Activated naive CD4-positive, alpha-beta T cell treated with anti-CD3 and anti-CD28 coated beads for 36 hours (primary cell): ENCODE measurements at regions of chr4 and their contacts with region 1.

Region 1: DNA sequence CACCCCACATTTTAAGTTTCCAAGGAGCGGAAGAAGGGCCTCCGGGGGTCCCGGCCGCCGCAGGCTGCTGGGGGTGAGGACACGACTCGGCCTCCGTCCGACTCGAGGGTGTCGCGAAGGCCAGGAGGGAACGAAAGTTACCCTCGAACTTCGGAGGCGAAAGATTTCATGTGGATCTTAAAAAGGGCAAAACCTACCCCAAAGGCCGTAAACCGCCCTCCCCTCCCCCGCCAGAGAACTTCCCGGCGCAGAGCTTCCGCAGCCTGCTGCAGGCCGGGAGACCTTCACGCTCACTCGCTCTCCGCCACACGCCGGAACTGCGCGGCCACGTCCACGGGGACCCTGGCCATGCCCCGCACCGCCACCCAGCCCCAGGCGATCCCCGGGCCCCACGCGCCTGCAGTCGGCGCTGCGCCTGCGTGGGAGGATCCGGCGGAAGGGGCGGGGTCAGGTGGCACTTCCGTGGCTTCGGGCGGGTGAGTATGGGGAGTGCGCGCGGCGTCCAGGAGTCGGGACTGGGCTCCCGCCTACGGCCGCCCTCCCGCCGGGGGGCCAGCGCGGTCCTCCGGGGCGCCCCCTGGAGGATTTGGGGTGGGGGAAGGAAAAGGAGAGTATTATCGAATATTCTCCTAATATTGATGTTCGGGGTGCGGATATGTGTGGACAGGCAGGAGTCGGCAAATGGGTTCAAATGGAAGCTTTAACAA is at the start of gene MMAA:
- DNase-seq: peak; percentile 95
- H3K4me3 Mint-ChIP-seq: peak within 1 kb of the TSS; percentile 93
- H3K27ac Mint-ChIP-seq: peak within 1 kb of the TSS; percentile 99
- H3K4me1 Mint-ChIP-seq: peaks cover 47% of the 10 kb centered on the region
- H3K27me3 Mint-ChIP-seq: no peaks in the 10 kb centered on the region
- total RNA-seq, gene MMAA: 15.2 to 19.6 TPM

Region 2: DNA sequence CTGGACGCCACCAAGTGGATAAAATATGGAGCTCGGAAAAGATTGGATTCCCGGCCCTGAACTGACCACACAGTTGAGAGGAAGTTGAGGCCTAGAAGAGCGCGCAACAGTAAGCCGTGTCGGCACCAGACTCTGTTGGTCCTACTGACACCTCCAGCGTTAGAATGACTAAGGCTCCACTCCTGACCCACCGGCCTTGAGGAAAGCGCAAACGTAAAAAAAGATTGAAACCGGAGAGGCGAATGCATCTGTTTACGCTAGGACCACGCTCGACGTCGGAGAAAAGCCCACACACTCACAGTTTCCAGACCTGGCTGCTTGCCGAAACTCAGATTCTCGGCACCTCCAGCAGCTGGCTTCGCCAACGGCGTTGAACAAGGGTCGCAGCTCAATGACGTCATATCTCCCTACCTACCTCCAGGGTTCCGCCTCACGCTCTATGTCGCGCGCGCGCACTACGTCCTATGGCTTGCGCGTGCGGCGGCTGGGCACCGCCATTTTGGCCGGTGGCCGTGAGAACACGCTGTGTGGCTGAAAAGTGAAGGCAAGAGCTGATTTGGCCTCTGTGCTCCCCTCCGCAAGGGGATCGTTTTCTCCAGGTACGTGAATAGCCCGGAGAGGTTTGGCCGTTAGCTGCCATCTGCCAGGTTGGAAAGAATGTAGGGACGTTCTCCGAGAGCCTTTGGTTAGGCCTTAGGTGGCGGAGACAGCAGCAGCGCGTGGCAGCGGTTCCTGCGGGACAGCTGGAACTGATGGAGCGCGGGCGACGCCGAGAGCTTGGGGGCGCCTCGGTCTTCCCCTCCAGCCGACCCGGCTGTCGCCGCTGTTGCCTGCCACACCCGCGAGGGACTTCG is 521.0 kb before region 1 on chr4 and contains the starts of genes ABCE1 and ANAPC10:
- CTCF ChIA-PET with region 1: interaction called, 6 read pairs
- intact Hi-C with region 1: loop called (anchors 1 kb)
- DNase-seq: peak; percentile 97
- H3K4me3 Mint-ChIP-seq: peak within 1 kb of the TSS; percentile 92
- H3K27ac Mint-ChIP-seq: peak within 1 kb of the TSS; percentile 97
- H3K4me1 Mint-ChIP-seq: peaks cover 23% of the 10 kb centered on the region
- H3K27me3 Mint-ChIP-seq: no peaks in the 10 kb centered on the region
- total RNA-seq, gene ABCE1: 164 to 174 TPM
- total RNA-seq, gene ANAPC10: 23.5 to 26.5 TPM

Region 3: DNA sequence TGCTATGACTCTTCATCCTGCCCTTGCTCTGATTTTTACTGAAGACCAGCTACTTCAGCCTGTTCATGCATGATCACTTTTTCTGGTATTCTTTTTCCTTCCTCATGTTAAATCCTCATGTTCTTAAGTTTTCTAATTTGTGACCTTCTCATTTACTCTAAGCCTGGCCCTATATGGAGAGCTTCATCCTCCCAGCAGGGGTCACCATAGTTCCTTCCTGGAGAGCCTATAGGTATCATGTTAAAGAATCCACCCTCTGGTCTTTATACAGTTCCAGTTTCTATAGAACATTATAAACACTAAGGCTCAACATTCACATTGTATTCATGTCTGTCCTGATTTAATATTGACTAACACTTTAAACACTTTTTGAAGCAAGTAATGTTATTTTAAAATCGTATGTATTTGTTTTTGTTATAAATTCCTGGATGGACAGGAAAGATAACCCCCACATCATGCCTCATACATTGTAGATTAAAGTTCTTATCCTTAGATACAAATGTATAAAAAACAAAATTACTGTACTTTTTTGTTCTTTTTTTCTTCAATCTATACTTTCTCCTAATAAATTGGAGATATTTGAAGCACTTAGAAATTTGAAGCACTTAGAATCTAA is 384.9 kb before region 1 on chr4:
- CTCF ChIA-PET with region 1: interaction called, 19 read pairs
- intact Hi-C with region 1: loop called (anchors 1 kb)
- DNase-seq: peak; percentile 80
- H3K4me3 Mint-ChIP-seq: no peak overlapping the region
- H3K27ac Mint-ChIP-seq: no peak overlapping the region
- H3K4me1 Mint-ChIP-seq: no peaks in the 10 kb centered on the region
- H3K27me3 Mint-ChIP-seq: no peaks in the 10 kb centered on the region

Region 4: DNA sequence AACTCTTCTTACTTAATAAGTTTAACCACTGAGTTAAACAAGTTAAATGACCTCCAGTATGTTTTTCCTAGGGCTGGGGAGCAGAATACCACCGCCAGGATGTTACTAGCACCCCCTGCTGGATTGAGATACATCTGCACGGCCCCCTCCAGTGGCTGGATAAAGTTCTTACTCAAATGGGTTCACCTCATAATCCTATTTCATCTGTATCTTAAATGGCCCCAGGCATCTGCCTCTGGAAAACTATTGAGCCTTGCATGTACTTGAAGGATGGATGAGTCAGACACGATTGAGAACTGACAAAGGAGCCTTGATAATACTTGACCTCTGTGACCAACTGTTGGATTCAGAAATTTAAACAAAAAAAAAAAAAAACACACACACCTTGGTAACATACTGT is 61.4 kb before region 1 on chr4:
- CTCF ChIA-PET with region 1: interaction called, 9 read pairs
- intact Hi-C with region 1: loop called (anchors 2 kb)
- DNase-seq: peak; percentile 73
- H3K4me3 Mint-ChIP-seq: no peak overlapping the region
- H3K27ac Mint-ChIP-seq: no peak overlapping the region
- H3K4me1 Mint-ChIP-seq: peaks cover under 1% of the 10 kb centered on the region
- H3K27me3 Mint-ChIP-seq: peaks cover 5% of the 10 kb centered on the region

Region 5: GRCh38 chr4:145829629-145830395 is 210.7 kb after region 1 on chr4:
- CTCF ChIA-PET with region 1: no interaction called
- intact Hi-C with region 1: loop called (anchors 1 kb)
- DNase-seq: peak; percentile 33
- H3K4me3 Mint-ChIP-seq: peak overlapping the region; percentile 23
- H3K27ac Mint-ChIP-seq: peak overlapping the region; percentile 13
- H3K4me1 Mint-ChIP-seq: peaks cover 41% of the 10 kb centered on the region
- H3K27me3 Mint-ChIP-seq: no peaks in the 10 kb centered on the region

Region 6: DNA sequence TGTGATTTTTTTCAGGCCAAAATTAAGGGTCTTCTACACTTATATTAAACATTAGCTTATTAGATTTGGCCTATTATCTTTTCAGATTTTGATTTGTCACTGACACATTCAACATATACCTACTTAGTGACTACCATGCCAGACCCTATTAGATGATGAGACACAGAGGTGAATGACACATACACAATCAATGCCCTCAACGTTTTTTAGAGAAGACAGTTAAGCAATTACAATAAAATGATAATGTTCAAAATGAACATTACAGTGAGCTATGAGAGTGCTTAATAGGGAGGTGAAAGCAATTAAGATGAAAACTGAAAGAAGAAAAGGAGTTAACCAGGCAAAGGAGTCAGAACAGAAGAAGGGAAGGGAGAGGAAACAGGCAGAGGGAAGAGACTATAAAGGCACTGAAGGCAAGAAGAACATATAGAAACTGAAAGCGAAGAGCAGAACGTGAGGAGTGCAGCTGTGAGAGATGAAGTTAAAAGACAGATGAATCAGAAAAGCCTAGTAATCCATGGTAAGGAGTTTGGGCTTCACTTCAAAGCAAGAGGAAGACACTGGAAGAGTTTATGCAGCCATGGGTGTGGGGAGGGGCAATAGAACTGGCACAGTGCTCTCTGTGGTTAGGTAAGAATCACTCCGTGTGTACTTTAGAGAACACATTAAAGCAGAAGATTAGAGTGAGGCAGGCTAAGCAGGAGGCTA is 714.3 kb after region 1 on chr4:
- CTCF ChIA-PET with region 1: no interaction called
- intact Hi-C with region 1: loop called (anchors 10 kb)
- DNase-seq: peak; percentile 41
- H3K4me3 Mint-ChIP-seq: no peak overlapping the region
- H3K27ac Mint-ChIP-seq: no peak overlapping the region
- H3K4me1 Mint-ChIP-seq: peaks cover 7% of the 10 kb centered on the region
- H3K27me3 Mint-ChIP-seq: no peaks in the 10 kb centered on the region